HCT116 (cell line): ENCODE measurements at regions of chr18 and their contacts with region 1.

Region 1: DNA sequence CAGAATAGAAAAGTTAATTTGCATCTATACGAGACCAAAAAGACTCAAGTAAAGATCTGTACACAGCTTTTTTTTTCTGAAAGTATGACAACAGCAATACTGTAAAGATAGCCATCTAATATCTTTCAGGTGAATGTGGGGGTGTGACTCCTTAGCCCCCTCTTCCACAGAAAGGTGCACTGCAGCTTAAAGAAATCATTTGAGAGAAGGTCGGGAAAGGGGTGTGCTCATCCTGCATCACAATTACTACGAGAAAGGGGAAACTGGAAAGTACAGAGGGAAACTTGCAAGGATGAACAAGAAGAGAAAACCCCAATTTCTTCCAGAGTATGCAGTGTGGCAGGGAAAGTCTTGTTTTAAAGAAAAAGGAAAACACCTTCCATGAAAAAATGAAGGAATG is 255.6 kb downstream of the CCDC178 start:
- DNase-seq: no peak
- ATAC-seq: no peak
- H3K4me3 ChIP-seq: no peak overlapping the region
- H3K27ac ChIP-seq: no peak overlapping the region
- H3K4me1 ChIP-seq: no peaks in the 10 kb centered on the region
- H3K27me3 ChIP-seq: no peaks in the 10 kb centered on the region
- CTCF ChIP-seq: no peak
- POLR2A ChIP-seq: no peak
- RAD21 ChIP-seq: no peak

Region 2: GRCh38 chr18:33239298-33239697 is 54.3 kb after region 1 on chr18:
- CTCF ChIA-PET with region 1: no interaction called
- POLR2A ChIA-PET with region 1: no interaction called
- RAD21 ChIA-PET with region 1: no interaction called
- intact Hi-C with region 1: loop called (anchors 10 kb)
- DNase-seq: no peak
- ATAC-seq: no peak
- H3K4me3 ChIP-seq: no peak overlapping the region
- H3K27ac ChIP-seq: no peak overlapping the region
- H3K4me1 ChIP-seq: no peaks in the 10 kb centered on the region
- H3K27me3 ChIP-seq: no peaks in the 10 kb centered on the region
- CTCF ChIP-seq: no peak
- POLR2A ChIP-seq: no peak
- RAD21 ChIP-seq: no peak